Astrocyte of the cerebellum (primary cell): ENCODE measurements at regions of chr6 and their contacts with region 1.

Region 1: GRCh38 chr6:99119109-99120031 is 171.6 kb upstream of the FBXL4 start:
- DNase-seq: peak; percentile 40
- H3K4me3 ChIP-seq: no peak overlapping the region
- CTCF ChIP-seq: peak; percentile 62

Region 2: DNA sequence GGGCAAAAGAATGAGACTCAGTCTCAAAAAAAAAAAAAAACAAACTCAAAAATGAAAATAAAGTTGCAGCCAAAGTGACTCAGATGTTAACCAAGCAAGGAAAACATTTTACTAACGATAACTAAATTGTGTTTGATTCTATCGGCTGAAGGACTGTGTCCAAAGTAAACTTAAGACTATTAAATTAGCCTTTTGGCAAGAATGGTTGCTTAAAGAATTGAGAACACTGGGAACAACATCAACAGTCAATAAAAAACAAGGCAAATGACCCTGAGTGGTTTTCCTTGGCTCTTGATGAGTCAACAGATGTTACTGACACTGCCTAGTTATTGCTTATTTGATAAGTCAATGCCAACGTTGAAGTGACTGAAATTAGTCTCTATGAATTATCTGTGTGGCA is 248.3 kb before region 1 on chr6:
- in situ Hi-C with region 1: loop called (anchors 25 kb)
- DNase-seq: peak; percentile 77
- H3K4me3 ChIP-seq: no peak overlapping the region
- CTCF ChIP-seq: no peak

Region 3: GRCh38 chr6:99297415-99297814 is 178.0 kb after region 1 on chr6:
- in situ Hi-C with region 1: no loop called
- DNase-seq: no peak
- H3K4me3 ChIP-seq: no peak overlapping the region
- CTCF ChIP-seq: no peak